Common myeloid progenitor, CD34-positive (primary cell): ENCODE measurements at regions of chr9 and their contacts with region 1.

Region 1: DNA sequence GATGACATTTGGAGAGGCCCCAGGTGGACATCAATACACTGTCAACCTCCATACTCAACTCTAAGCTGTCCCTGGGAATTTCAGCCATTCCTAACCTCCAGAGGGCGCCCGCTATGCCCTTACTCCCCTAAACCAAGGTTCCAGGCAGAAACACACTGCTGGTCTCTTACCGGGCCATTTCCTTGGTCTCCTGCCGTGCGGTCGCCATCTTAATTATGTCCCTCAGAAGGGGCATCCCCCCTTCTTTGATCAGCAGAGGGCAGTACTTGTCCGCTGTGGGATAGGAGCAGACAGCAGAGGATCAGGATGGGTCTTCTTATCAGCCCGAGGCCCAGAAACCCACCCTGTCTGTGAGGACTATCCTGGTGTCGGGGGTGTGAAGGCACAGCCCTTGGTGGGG is 9.3 kb upstream of the ZDHHC12 start:
- DNase-seq: peak; percentile 77 to 84 (median 79)
- H3K4me3 ChIP-seq: no peak overlapping the region
- H3K27ac ChIP-seq: no peak overlapping the region
- H3K4me1 ChIP-seq: peaks cover 0 to 2% (median 0%) of the 10 kb centered on the region in 4 experiments
- H3K27me3 ChIP-seq: no peaks in the 10 kb centered on the region

Region 2: DNA sequence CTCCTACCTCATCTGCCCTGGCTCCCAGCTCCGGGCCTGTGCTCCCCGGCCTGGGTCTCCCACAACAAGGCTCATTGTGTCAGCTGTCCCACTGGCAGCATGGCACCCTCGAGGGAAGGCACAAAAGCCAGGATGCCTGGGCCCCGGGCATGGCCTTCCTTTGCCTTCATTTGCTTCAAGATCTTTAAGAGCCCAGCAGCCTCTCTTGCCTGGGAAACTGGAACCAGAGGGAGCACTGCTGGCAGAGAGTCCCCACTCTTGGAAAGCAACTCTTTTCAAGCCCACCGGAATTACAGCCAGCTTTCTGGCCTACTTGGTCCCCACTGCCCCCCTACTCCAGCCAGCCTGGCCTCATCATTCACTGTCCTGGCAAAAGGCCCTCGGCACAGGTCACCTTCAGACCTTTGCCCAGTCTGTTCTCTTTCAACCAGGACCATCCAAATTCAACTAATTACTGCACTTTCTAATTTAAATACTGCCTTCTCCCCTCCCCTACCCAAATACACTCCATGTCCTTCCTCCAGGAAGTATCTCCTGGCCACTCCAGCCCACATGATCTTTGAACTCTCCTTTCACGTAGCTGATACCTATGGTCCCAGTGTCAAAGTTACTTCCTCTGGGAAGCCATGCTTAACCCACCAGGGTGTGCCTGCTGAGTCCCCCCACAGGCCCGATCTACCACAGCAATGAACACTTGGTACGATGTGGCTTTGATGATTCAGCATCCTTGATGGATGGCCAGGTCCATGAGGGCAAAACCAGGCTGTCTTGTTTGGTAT is 29.6 kb after region 1 on chr9:
- CTCF ChIA-PET with region 1: interaction called, 7 read pairs
- POLR2A ChIA-PET with region 1: interaction called, 13 read pairs
- DNase-seq: peak in 2 of 3 donors; percentile 54 to 55
- H3K4me3 ChIP-seq: no peak overlapping the region
- H3K27ac ChIP-seq: no peak overlapping the region
- H3K4me1 ChIP-seq: peaks cover 0 to 20% (median 13%) of the 10 kb centered on the region in 4 experiments
- H3K27me3 ChIP-seq: no peaks in the 10 kb centered on the region

Region 3: GRCh38 chr9:128787604-128788041 is 54.4 kb after region 1 on chr9:
- CTCF ChIA-PET with region 1: interaction called, 11 read pairs
- POLR2A ChIA-PET with region 1: no interaction called
- DNase-seq: peak in 1 of 3 donors; percentile 8
- H3K4me3 ChIP-seq: peak overlapping the region; percentile 82 to 100 (median 86)
- H3K27ac ChIP-seq: peak overlapping the region in 1 of 2 experiments; percentile 85
- H3K4me1 ChIP-seq: peaks cover 3 to 37% (median 33%) of the 10 kb centered on the region in 4 experiments
- H3K27me3 ChIP-seq: no peaks in the 10 kb centered on the region